PC-3 (cell line): ENCODE measurements at regions of chr12 and their contacts with region 1.

Region 1: DNA sequence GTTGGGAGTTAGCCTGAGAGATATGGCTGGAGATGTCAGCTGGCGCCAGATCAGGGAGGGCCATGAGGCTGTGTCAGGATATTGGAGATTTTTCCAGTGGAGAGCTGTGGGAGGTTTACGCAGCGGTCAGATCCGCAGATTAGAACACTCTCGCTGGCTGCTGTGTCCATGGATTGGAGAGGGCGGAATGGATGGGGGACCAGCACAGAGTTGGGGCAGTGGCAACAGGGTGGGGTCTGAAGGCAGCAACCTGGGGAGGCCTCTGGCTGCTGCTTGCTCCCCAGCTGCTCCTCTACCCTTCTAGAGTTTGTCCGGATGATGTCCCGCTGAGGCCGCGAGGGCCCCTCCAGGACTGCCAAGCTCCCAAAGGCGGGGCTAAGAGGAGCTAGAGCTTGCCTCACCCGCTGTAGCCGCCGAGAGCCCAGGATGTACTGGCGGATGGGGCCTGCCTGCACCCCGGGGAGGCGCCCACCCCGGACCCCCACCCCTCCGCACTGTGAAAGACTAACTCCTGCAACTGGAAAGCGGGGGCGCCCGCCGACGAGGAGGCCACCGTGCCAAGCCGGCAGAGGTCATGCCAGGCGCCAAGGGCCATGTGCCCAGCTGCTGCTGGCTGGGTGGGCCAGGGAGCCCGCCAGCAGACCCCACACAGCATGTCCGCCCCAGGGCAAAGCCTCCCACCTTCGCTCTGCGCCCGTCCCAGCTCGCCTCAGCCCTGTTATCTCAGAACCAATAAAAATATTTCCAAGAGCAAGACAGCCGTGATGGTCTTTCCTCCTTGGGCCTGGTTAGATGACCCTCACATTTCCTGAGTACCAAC is 20.2 kb upstream of the MLEC start:
- DNase-seq: no peak
- ATAC-seq: no peak
- H3K4me3 ChIP-seq: no peak overlapping the region
- H3K27ac ChIP-seq: no peak overlapping the region
- H3K4me1 ChIP-seq: no peaks in the 10 kb centered on the region
- H3K27me3 ChIP-seq: peaks cover 4% of the 10 kb centered on the region; the same call in 1 of the 2 replicates
- CTCF ChIP-seq: no peak

Region 2: DNA sequence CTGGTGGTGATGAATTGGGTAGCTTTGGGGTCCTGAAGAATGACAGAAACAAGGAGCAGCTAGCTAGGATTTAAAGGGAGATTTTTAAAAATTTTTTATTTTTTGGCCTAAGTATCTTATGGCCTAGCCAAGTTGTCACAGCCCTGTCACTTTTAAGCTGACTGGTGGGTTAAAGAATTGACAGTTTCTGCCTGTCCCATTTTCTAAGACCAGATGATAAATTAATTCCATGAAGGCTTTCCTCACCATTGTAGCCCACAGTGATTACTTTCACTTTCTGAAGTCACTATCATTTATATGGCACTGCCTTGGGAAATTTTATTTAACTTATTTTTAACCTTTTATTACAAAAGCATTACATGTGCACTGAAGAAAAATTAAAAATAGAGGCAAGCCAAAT is 634.5 kb before region 1 on chr12:
- CTCF ChIA-PET with region 1: no interaction called
- POLR2A ChIA-PET with region 1: no interaction called
- intact Hi-C with region 1: no loop called
- DNase-seq: no peak
- ATAC-seq: no peak
- H3K4me3 ChIP-seq: no peak overlapping the region
- H3K27ac ChIP-seq: no peak overlapping the region
- H3K4me1 ChIP-seq: no peaks in the 10 kb centered on the region
- H3K27me3 ChIP-seq: no peaks in the 10 kb centered on the region
- CTCF ChIP-seq: no peak

Region 3: DNA sequence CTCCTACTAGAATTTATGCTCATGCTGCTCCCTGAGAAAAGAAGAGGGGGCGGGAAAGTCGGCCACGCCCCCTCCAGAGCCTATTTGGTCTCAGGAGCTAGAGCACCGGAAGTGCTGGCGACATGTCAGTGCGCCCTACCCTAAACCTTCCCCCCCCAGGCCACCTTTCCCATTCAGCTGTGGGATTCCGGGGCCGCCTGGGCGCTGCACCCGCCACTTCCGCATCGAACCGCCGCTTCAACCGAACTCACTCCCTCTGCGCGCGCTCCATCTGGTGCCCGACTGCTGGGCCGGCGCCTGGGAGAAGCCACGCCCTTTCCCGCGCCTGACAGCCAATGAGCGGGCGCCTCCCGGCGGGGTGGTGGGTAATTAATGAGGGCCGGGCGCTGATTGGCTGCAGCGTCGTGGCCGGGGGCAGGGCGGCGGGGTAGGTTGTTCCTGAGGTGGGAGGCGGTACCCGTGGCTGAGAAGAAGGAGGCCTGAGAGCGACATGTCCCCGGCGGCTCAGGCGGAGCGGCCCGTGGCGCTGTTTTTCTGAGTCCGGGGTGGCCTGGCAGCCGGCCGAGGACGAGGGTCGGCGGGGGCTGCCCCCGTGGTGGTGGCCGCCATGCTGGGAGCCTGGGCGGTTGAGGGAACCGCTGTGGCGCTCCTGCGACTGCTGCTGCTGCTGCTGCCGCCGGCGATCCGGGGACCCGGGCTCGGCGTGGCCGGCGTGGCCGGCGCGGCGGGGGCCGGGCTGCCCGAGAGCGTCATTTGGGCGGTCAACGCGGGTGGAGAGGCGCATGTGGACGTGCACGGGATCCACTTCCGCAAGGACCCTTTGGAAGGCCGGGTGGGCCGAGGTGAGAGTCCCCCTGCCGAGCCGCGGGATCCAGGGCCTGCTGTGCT is 20.2 kb after region 1 on chr12 and contains the start of gene MLEC:
- CTCF ChIA-PET with region 1: no interaction called
- POLR2A ChIA-PET with region 1: no interaction called
- intact Hi-C with region 1: no loop called
- DNase-seq: peak; percentile 98
- ATAC-seq: peak; percentile 76
- H3K4me3 ChIP-seq: peak within 1 kb of the TSS; percentile 96
- H3K27ac ChIP-seq: peak within 1 kb of the TSS; percentile 93
- H3K4me1 ChIP-seq: peaks cover 34% of the 10 kb centered on the region
- H3K27me3 ChIP-seq: no peaks in the 10 kb centered on the region
- CTCF ChIP-seq: peak; percentile 18; the same call in 1 of the 2 replicates
- total RNA-seq, gene MLEC: 158 and 166 TPM in 2 replicates

Region 4: GRCh38 chr12:120739821-120740613 is 73.2 kb after region 1 on chr12:
- CTCF ChIA-PET with region 1: no interaction called
- POLR2A ChIA-PET with region 1: interaction called, 21 read pairs
- intact Hi-C with region 1: no loop called
- DNase-seq: no peak
- ATAC-seq: no peak
- H3K4me3 ChIP-seq: no peak overlapping the region
- H3K27ac ChIP-seq: no peak overlapping the region
- H3K4me1 ChIP-seq: no peaks in the 10 kb centered on the region
- H3K27me3 ChIP-seq: no peaks in the 10 kb centered on the region
- CTCF ChIP-seq: no peak

Region 5: DNA sequence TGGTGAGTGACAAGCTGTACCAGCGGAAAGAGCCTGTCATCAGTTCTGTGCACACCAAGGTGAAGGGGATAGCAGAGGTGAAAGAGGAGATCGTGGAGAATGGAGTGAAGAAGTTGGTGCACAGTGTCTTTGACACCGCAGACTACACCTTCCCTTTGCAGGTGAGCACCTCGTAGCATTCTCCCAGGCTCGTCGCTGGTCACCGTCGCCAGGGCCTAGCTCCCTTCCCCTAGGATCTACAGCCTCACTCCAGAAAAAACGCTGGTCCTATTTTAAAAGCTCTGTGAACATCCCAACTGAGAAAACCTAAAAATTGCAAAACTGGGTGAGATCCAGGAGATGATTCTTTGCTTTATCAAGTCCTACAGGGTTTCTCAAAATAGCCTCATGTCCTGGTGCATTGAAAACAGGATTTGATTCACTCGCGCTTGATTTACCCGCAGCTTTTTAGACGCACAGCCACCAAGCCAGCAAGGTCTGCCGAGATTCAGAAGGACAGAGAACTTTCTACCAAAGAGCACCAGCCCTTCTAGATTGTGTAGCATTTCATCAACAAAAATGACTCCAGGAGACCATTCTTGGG is 488.1 kb after region 1 on chr12:
- CTCF ChIA-PET with region 1: no interaction called
- POLR2A ChIA-PET with region 1: no interaction called
- intact Hi-C with region 1: no loop called
- DNase-seq: no peak
- ATAC-seq: no peak
- H3K4me3 ChIP-seq: no peak overlapping the region
- H3K27ac ChIP-seq: no peak overlapping the region
- H3K4me1 ChIP-seq: no peaks in the 10 kb centered on the region
- H3K27me3 ChIP-seq: no peaks in the 10 kb centered on the region
- CTCF ChIP-seq: no peak